SK-N-SH (cell line): ENCODE measurements at regions of chr5 and their contacts with region 1.

Region 1: GRCh38 chr5:142713121-142713706 is 27.3 kb upstream of the FGF1 start:
- DNase-seq: peak; percentile 85
- H3K4me3 ChIP-seq: peak overlapping the region; percentile 61 to 90
- H3K27ac ChIP-seq: peak overlapping the region; percentile 76 to 80
- H3K4me1 ChIP-seq: peaks cover 5 to 26% of the 10 kb centered on the region in 2 experiments; a peak in 3 of 4 replicates
- H3K27me3 ChIP-seq: no peaks in the 10 kb centered on the region
- CTCF ChIP-seq: peak; percentile 98
- EP300 ChIP-seq: no peak
- RAD21 ChIP-seq: peak; percentile 58

Region 2: GRCh38 chr5:142636076-142636475 is 77.1 kb before region 1 on chr5:
- CTCF ChIA-PET with region 1: interaction called, 11 read pairs
- POLR2A ChIA-PET with region 1: no interaction called
- DNase-seq: peak; percentile 69
- H3K4me3 ChIP-seq: no peak overlapping the region
- H3K27ac ChIP-seq: peak overlapping the region in 1 of 2 experiments; percentile 80; a peak in 2 of 4 replicates
- H3K4me1 ChIP-seq: peaks cover 6 to 33% of the 10 kb centered on the region in 2 experiments; a peak in 3 of 4 replicates
- H3K27me3 ChIP-seq: no peaks in the 10 kb centered on the region
- CTCF ChIP-seq: no peak
- EP300 ChIP-seq: peak in 1 of 2 experiments; percentile 61; a peak in 1 of 4 replicates
- RAD21 ChIP-seq: no peak

Region 3: DNA sequence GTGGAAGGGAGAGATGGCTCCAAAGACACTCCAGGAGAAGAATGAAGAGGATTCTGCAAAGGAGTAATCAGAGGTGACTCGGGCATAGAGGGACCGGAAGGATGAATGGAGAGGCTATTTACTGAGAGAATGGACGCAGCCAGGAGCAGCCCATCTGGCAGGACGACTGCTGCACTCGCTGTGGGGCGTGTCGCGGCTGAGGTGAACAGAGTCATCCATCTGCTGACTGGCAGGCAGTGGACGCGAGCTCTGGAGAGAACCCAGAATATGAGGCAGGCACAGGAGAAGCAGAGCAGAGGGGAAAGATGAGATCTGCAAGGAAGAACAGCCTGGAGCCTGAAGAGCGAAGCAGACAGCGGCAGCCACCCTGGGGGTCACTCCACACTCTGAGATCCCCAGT is 43.7 kb before region 1 on chr5:
- CTCF ChIA-PET with region 1: interaction called, 668 read pairs
- POLR2A ChIA-PET with region 1: no interaction called
- DNase-seq: no peak
- H3K4me3 ChIP-seq: no peak overlapping the region
- H3K27ac ChIP-seq: no peak overlapping the region
- H3K4me1 ChIP-seq: peaks cover 8 to 17% of the 10 kb centered on the region in 2 experiments; a peak in 2 of 4 replicates
- H3K27me3 ChIP-seq: no peaks in the 10 kb centered on the region
- CTCF ChIP-seq: no peak
- EP300 ChIP-seq: no peak
- RAD21 ChIP-seq: no peak

Region 4: DNA sequence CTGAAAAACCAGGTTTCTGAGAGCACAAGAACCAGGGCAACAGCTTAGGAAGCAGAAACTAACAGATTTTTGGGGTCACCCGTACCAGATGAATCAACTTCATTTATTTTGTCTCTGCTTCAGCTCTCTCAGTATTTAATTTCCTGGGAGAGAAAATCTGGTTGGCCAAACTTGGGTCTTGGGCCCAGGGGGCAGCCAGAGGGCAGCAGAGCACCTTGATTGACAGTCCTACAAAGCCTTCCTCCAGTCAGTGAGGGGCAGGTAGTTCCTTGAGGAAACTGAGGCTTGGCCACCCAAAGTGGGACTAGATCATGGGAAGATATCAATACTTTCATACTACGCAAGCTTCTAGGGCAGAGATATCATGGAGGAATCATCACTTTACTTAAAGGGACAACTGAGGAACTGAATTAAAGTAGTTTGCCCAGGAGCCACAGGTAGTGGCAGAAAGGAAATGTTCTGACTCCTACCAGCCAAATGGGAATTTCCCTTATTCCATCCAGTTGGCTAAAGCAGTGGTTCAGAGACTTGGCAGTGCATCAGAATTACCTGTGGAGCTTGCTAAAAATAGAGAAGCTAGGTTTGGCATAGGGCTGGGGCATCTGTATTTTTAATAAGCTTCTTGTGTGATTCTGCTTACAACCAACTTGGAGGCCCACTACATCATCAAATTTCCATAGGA is 35.5 kb after region 1 on chr5:
- CTCF ChIA-PET with region 1: interaction called, 472 read pairs
- POLR2A ChIA-PET with region 1: interaction called, 4 read pairs
- DNase-seq: peak; percentile 16
- H3K4me3 ChIP-seq: no peak overlapping the region; a peak in 1 of 4 replicates
- H3K27ac ChIP-seq: peak overlapping the region in 1 of 2 experiments; percentile 70; a peak in 2 of 4 replicates
- H3K4me1 ChIP-seq: peaks cover 11 to 26% of the 10 kb centered on the region in 2 experiments
- H3K27me3 ChIP-seq: no peaks in the 10 kb centered on the region
- CTCF ChIP-seq: peak; percentile 49
- EP300 ChIP-seq: no peak
- RAD21 ChIP-seq: peak; percentile 80

Region 5: DNA sequence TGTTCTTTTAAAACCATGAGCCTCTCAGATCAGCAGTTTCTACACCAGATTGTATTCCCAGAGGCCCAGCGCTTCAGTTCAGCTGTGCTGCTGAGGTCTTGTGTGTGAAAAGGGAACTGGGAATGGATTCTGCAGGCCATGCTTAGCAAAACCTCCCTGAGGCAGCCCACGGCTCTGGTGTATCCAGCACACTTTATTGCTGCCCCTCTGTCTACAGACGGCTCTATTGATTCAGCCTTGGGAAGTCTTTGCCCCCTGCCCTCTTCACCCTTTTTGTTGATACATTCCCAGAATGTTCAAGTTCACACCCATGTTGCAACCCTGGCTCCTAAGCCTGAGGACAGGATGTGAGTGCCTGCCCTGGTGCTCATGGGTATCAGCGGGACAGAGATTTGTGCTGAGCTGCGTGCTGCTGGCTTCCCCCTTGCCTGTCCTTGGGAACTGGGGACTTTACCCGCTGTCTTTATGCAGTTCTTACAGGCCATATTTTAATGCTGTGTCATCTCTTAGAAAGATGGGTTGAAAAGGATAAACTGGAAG is 94.2 kb after region 1 on chr5:
- CTCF ChIA-PET with region 1: interaction called, 13 read pairs
- POLR2A ChIA-PET with region 1: no interaction called
- DNase-seq: no peak
- H3K4me3 ChIP-seq: no peak overlapping the region
- H3K27ac ChIP-seq: peak overlapping the region in 1 of 2 experiments; percentile 89; a peak in 2 of 4 replicates
- H3K4me1 ChIP-seq: peaks cover 6 to 50% of the 10 kb centered on the region in 2 experiments; a peak in 3 of 4 replicates
- H3K27me3 ChIP-seq: no peaks in the 10 kb centered on the region
- CTCF ChIP-seq: no peak
- EP300 ChIP-seq: no peak
- RAD21 ChIP-seq: no peak

Region 6: DNA sequence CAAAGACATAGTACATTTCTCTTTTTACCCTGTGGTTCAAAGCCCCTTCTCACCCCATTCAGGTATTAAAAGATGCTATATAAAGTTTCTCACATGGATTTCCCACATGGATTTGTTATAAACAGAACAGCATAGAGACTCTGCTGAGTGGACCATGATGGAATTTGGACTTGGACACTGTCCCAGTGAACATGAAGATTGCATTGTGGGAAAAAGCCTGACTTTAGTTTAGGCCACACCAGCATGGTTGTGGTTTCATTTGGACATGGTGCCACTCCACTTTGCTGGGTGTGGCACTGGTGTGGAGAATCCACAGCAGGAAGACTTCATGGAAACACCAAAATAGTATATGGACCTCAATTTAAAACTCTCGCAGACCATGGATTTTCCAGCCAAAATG is 181.5 kb after region 1 on chr5:
- CTCF ChIA-PET with region 1: interaction called, 1,285 read pairs
- POLR2A ChIA-PET with region 1: no interaction called
- DNase-seq: no peak
- H3K4me3 ChIP-seq: no peak overlapping the region
- H3K27ac ChIP-seq: no peak overlapping the region
- H3K4me1 ChIP-seq: peaks cover under 1 to 11% of the 10 kb centered on the region in 2 experiments; a peak in 2 of 4 replicates
- H3K27me3 ChIP-seq: no peaks in the 10 kb centered on the region
- CTCF ChIP-seq: no peak
- EP300 ChIP-seq: no peak
- RAD21 ChIP-seq: no peak

Region 7: GRCh38 chr5:142922223-142922952 is 209.2 kb after region 1 on chr5:
- CTCF ChIA-PET with region 1: interaction called, 17 read pairs
- POLR2A ChIA-PET with region 1: no interaction called
- DNase-seq: peak; percentile 51
- H3K4me3 ChIP-seq: no peak overlapping the region
- H3K27ac ChIP-seq: no peak overlapping the region
- H3K4me1 ChIP-seq: peaks cover 3 to 11% of the 10 kb centered on the region in 2 experiments
- H3K27me3 ChIP-seq: no peaks in the 10 kb centered on the region
- CTCF ChIP-seq: peak; percentile 66
- EP300 ChIP-seq: no peak
- RAD21 ChIP-seq: peak; percentile 79